ENCODE measurements at regions of chr15 and their contacts with region 1.

Region 1: GRCh38 chr15:45790325-45790943 is 155.6 kb downstream of the SQOR start:
- DNase-seq: no peak
- H3K4me3 ChIP-seq: no peak overlapping the region
- H3K27ac ChIP-seq: no peak overlapping the region
- H3K4me1 ChIP-seq: no peaks in the 10 kb centered on the region
- H3K27me3 ChIP-seq: no peaks in the 10 kb centered on the region
- CTCF ChIP-seq: peak in 2 of 3 experiments; percentile 58 to 61; a peak in 3 of 4 replicates
- EP300 ChIP-seq: no peak
- POLR2A ChIP-seq: no peak
- RAD21 ChIP-seq: peak; percentile 66

Region 2: GRCh38 chr15:45414215-45414885 is 376.1 kb before region 1 on chr15:
- CTCF ChIA-PET with region 1: no interaction called
- POLR2A ChIA-PET with region 1: no interaction called
- DNase-seq: no peak
- H3K4me3 ChIP-seq: no peak overlapping the region
- H3K27ac ChIP-seq: no peak overlapping the region
- H3K4me1 ChIP-seq: no peaks in the 10 kb centered on the region
- H3K27me3 ChIP-seq: no peaks in the 10 kb centered on the region
- CTCF ChIP-seq: no peak
- EP300 ChIP-seq: no peak
- POLR2A ChIP-seq: no peak
- RAD21 ChIP-seq: no peak

Region 3: DNA sequence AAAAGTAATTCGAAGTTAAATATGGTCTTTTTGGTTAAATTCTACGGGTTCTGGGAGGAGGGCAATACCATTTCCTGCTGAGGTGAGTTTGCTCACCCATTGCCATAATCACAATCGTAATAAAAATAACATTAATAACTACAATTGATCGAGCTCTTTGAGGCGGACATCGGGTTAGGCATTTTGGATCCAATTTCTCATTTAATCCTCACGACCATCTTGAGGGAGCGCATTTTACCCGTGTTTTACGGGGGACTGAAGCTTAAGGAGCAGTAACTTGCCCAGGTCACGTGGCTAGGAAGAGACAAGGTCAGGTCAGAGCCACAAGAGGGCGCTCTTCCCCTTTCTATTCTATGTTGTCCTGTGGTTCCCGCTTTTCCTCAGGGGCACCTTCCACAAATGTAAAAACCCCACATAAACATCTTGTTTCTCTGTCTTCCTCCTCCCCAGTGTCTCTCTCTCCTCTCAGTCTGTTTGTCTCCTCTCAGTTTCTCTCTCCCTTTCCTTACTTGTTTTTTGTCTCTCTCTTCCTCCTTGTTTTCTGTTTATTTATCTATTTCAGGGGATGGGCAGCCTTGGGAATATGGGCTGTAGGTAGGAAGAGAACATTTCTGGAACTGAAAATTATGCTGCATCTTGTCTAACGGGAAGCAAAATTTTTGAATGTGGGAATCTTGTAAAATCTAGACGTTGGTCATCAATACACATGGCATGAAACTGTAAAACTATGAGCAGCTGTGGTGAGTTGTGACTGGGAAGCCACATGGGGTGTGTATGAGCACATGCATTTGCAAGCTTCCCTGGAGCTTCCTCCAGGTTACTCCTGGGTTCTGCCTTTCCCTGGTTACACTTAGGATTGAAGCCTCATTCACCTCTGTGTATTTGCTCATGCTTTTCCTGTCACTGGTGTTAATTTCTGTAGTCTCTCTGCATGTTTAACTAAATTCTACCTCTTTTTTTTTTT is 84.6 kb before region 1 on chr15:
- CTCF ChIA-PET with region 1: interaction called, 54 read pairs
- POLR2A ChIA-PET with region 1: interaction called, 3 read pairs
- DNase-seq: peak; percentile 68 to 83
- H3K4me3 ChIP-seq: peak overlapping the region; percentile 38 to 72 (median 62)
- H3K27ac ChIP-seq: no peak overlapping the region
- H3K4me1 ChIP-seq: no peaks in the 10 kb centered on the region
- H3K27me3 ChIP-seq: peaks cover 0 to 3% (median 0%) of the 10 kb centered on the region in 4 experiments; a peak in 3 of 7 replicates
- CTCF ChIP-seq: peak; percentile 67 to 90 (median 74)
- EP300 ChIP-seq: 0 out of 3 replicates have a peak, but pooled peaks of 1 of the 2 experiments have one; percentile 4
- POLR2A ChIP-seq: no peak
- RAD21 ChIP-seq: peak; percentile 82 to 84

Region 4: GRCh38 chr15:45714590-45715488 is 75.6 kb before region 1 on chr15:
- CTCF ChIA-PET with region 1: interaction called, 89 read pairs
- POLR2A ChIA-PET with region 1: interaction called, 3 read pairs
- DNase-seq: peak; percentile 38 to 81
- H3K4me3 ChIP-seq: no peak overlapping the region
- H3K27ac ChIP-seq: no peak overlapping the region
- H3K4me1 ChIP-seq: peaks cover 0 to 2% (median 0%) of the 10 kb centered on the region in 4 experiments; a peak in 2 of 7 replicates
- H3K27me3 ChIP-seq: no peaks in the 10 kb centered on the region
- CTCF ChIP-seq: peak; percentile 88 to 96 (median 93)
- EP300 ChIP-seq: no peak
- POLR2A ChIP-seq: no peak
- RAD21 ChIP-seq: peak; percentile 88 to 89

Region 5: DNA sequence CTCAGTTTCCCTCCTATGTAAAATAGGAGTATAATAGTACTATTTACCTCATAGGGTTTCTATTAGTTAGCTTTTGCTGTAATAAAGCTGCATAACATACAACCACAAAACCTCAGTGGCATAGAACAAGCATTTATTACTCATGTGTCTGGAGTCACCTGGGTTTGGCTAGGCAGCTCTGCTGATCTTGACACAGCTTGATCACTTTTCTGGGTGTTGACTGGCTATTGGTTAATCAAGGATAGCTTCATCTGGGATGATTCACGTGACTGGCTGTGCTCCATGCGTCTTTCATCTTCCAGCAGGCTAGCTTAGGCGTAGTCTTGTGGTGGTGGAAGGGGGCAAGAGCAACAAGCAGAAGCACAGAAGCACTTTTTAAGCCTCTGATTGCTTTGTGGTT is 43.0 kb before region 1 on chr15:
- CTCF ChIA-PET with region 1: interaction called, 14 read pairs
- POLR2A ChIA-PET with region 1: no interaction called
- DNase-seq: no peak
- H3K4me3 ChIP-seq: no peak overlapping the region
- H3K27ac ChIP-seq: no peak overlapping the region
- H3K4me1 ChIP-seq: peaks cover 0 to 7% (median 3%) of the 10 kb centered on the region in 4 experiments; a peak in 5 of 7 replicates
- H3K27me3 ChIP-seq: no peaks in the 10 kb centered on the region
- CTCF ChIP-seq: no peak
- EP300 ChIP-seq: no peak
- POLR2A ChIP-seq: no peak
- RAD21 ChIP-seq: no peak

Region 6: GRCh38 chr15:45759936-45760335 is 30.5 kb before region 1 on chr15:
- CTCF ChIA-PET with region 1: interaction called, 12 read pairs
- POLR2A ChIA-PET with region 1: no interaction called
- DNase-seq: no peak
- H3K4me3 ChIP-seq: no peak overlapping the region
- H3K27ac ChIP-seq: no peak overlapping the region
- H3K4me1 ChIP-seq: 0 out of 7 replicates have a peak, but pooled peaks cover 0 to 6% (median 1%) of the 10 kb centered on the region in 4 experiments
- H3K27me3 ChIP-seq: no peaks in the 10 kb centered on the region
- CTCF ChIP-seq: no peak
- EP300 ChIP-seq: no peak
- POLR2A ChIP-seq: no peak
- RAD21 ChIP-seq: no peak

Region 7: GRCh38 chr15:45780352-45780751 is 10.1 kb before region 1 on chr15:
- CTCF ChIA-PET with region 1: interaction called, 45 read pairs
- POLR2A ChIA-PET with region 1: no interaction called
- DNase-seq: no peak
- H3K4me3 ChIP-seq: no peak overlapping the region
- H3K27ac ChIP-seq: no peak overlapping the region
- H3K4me1 ChIP-seq: peaks cover 0 to 10% (median 3%) of the 10 kb centered on the region in 4 experiments; a peak in 5 of 7 replicates
- H3K27me3 ChIP-seq: no peaks in the 10 kb centered on the region
- CTCF ChIP-seq: peak in 2 of 3 experiments; percentile 31 to 42; a peak in 2 of 4 replicates
- EP300 ChIP-seq: no peak
- POLR2A ChIP-seq: no peak
- RAD21 ChIP-seq: peak; percentile 9 to 23; a peak in 1 of 4 replicates

Region 8: GRCh38 chr15:46260937-46261336 is 470.5 kb after region 1 on chr15:
- CTCF ChIA-PET with region 1: interaction called, 10 read pairs
- POLR2A ChIA-PET with region 1: no interaction called
- DNase-seq: peak in 1 of 2 experiments; percentile 34
- H3K4me3 ChIP-seq: no peak overlapping the region
- H3K27ac ChIP-seq: no peak overlapping the region
- H3K4me1 ChIP-seq: no peaks in the 10 kb centered on the region; a peak in 1 of 7 replicates
- H3K27me3 ChIP-seq: no peaks in the 10 kb centered on the region
- CTCF ChIP-seq: peak; percentile 63 to 71 (median 63)
- EP300 ChIP-seq: no peak
- POLR2A ChIP-seq: no peak
- RAD21 ChIP-seq: peak; percentile 70 to 75

Measured in H1 (cell line).